Lower leg skin (tissue), 4 donors: ENCODE measurements at regions of chr6 and their contacts with region 1.

Region 1: GRCh38 chr6:117498159-117498558 is 15.7 kb downstream of the DCBLD1 start:
- DNase-seq: no peak
- H3K4me3 ChIP-seq: no peak overlapping the region
- CTCF ChIP-seq: no peak
- POLR2A ChIP-seq: no peak

Region 2: DNA sequence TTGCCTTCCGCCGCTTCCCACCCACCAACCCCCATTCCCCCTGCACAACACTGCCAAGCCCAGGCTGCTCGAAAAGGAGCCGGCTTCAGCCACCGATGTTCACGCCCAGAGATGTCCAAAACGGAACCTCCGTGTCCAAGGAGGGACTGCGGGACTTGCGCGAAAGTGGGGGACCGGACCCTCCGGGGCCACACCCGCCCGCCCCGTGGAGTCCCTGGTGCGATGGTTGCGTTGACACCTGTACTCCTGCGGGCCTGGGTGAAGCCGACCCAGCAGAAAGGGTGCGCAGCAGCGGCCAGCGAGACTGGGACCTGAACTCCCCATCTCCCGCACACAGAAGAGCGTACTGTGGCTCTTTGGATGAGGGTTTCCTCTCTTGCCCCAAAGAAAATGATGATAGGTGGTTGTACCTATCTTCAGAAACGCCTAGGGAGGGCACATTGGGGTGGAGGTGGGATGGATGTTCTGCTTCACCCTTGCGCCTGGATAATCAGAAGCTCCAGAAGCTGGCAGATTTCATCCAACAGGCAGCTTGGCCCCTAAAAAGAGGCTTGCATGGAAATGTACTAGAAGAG is 234.7 kb before region 1 on chr6:
- intact Hi-C with region 1: no loop called
- DNase-seq: no peak
- H3K4me3 ChIP-seq: no peak overlapping the region
- CTCF ChIP-seq: no peak
- POLR2A ChIP-seq: no peak

Region 3: GRCh38 chr6:117547688-117548621 is 49.8 kb after region 1 on chr6:
- intact Hi-C with region 1: loop called (anchors 10 kb)
- DNase-seq: peak; percentile 41 to 87
- H3K4me3 ChIP-seq: no peak overlapping the region
- CTCF ChIP-seq: no peak
- POLR2A ChIP-seq: no peak